HEK293T (cell line): ENCODE measurements at regions of chr10 and their contacts with region 1.

Region 1: DNA sequence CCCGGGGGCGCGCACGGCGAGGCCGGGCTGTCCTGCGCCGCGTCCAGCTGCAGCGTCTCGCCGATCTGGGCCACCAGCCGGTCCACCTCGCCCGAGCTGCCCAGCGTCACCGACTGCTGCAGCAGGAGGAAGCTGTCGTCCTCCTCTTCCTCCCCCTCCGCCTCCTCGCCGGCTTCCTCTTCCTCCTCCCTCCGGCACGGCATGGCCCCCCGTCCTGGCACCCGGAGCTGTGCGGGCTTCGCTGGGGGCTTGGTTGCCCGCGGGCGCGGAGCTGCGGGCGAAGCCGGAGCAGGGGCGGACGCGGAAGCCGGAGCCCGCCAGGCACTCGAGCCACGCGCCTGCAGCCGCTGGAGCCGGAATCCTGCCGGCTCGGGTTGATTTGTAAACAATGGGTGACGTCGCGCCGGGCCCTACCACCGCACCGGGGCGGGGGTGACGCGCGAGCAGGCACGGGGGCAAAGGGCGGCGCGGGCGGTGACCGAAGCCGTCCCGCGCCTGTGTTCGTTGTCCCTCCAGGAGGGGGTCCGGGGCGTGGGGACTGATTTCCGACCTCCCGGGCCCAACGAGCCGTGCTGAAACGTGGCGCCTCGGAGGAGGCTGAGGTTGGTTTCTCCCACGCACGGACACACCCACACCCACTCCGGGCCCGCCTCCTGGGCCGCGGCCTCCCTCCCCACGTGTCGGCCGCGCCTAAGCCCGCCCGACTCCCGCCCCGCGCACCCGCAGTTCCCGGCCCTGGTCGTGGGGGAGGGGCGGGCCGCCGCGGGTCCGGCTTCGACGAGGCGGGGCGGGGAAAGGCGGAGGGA is at the start of gene FRAT2:
- DNase-seq: peak; percentile 96

Region 2: GRCh38 chr10:97278491-97278989 is 56.0 kb before region 1 on chr10:
- CTCF ChIA-PET with region 1: interaction called, 18 read pairs
- POLR2A ChIA-PET with region 1: interaction called, 17 read pairs
- DNase-seq: peak; percentile 59

Region 3: DNA sequence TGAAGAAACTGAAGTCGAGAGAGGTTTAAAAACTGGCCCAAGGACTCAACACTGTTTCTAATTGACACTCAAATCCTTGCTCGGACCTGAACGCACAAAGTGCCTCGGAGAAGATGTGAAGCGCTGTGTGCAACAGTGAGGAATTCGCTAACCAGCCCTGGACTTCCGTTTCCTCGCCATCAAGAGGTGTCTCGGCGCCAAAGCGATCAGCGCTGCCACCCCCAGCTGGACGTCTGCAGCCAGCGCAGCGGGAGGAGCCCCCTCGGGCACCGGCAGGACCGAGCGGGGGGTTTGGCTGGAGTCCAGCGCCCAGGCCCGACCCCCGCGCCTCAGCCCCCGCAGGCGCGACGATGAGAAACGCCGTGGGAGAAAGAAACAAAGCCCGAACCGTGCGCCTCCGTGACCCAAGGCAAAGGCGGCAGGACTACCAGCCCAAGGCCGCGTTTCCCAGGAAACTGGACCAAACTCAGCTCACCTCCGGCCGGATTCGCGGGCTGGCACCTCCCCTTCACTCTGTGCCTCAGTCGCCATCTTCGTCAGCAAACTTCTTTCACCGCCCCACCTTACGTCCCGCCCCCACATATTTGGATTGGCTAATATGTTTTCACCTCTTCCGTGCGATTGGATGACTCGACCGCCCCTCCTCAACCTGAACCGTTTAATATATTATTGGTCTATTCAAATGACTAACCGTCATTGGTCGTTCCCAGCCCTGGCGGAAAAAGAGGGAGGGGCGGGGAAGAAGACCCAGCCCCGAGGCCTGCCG is 42.3 kb before region 1 on chr10 and contains the start of gene ARHGAP19:
- CTCF ChIA-PET with region 1: interaction called, 5 read pairs
- POLR2A ChIA-PET with region 1: interaction called, 11 read pairs
- DNase-seq: peak; percentile 96

Region 4: GRCh38 chr10:97318772-97319651 is 15.6 kb before region 1 on chr10 and contains the start of gene FRAT1:
- CTCF ChIA-PET with region 1: interaction called, 4 read pairs
- POLR2A ChIA-PET with region 1: interaction called, 22 read pairs
- DNase-seq: peak; percentile 89

Region 5: DNA sequence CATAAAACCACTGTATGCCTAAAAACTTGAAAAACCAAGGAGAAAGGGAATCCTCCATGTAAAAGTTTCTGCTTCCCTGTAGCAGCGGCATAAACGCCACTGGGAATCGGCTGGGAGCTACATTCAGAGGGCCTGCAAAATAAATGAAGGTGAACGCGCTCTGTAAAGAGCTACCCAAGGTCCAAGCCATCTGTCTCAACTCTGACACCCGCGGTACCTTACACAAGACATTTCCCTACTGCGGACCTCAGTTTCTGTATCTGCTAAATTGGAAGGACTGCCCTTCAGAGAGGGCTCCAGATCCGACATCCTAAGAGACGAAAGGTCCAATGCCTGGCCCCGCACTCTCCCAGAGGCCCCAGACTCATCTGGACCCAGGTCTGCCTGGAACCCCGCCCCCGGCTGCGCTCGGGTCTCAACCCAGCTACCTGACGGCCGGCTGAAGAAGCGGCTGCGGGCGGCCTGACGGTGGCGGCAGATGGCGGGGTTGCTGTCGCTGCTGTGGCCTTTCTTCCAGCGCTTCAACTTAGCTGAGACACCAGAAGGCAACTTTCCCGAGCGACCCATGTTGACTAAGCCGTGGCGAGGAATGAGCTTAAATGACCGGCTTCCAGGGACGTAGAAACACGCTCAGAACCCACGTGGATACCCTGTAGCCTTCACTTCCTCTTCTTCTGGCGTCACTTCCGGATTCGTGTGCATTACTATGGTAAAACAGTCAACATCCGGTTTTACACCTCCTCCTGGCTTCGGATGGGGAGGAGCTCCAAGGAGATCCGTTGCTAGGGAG is 66.3 kb after region 1 on chr10 and contains the start of gene RRP12:
- CTCF ChIA-PET with region 1: interaction called, 5 read pairs
- POLR2A ChIA-PET with region 1: interaction called, 10 read pairs
- DNase-seq: peak; percentile 98